A549 (cell line): ENCODE measurements at regions of chr6 and their contacts with region 1.

Region 1: GRCh38 chr6:73520688-73521350 is at the start of gene EEF1A1:
- DNase-seq: peak; percentile 85 to 98
- ATAC-seq: peak; percentile 80 to 84
- H3K4me3 ChIP-seq: peak within 1 kb of the TSS; percentile 91
- H3K27ac ChIP-seq: peak within 1 kb of the TSS; percentile 99 to 100
- H3K4me1 ChIP-seq: peaks cover 30% of the 10 kb centered on the region
- CTCF ChIP-seq: no peak
- EP300 ChIP-seq: no peak
- POLR2A ChIP-seq: peak; percentile 98
- RAD21 ChIP-seq: peak in 1 of 2 experiments; percentile 26; a peak in 2 of 5 replicates
- polyA plus RNA-seq, gene EEF1A1: 9,755 and 11,157 TPM in 2 replicates

Region 2: GRCh38 chr6:73461537-73462350 is 59.1 kb before region 1 on chr6 and contains the start of gene MTO1:
- CTCF ChIA-PET with region 1: no interaction called
- POLR2A ChIA-PET with region 1: interaction called, 18 read pairs
- DNase-seq: peak; percentile 86 to 88
- ATAC-seq: peak; percentile 99
- H3K4me3 ChIP-seq: peak within 1 kb of the TSS; percentile 65
- H3K27ac ChIP-seq: peak within 1 kb of the TSS; percentile 87 to 89
- H3K4me1 ChIP-seq: no peaks in the 10 kb centered on the region
- CTCF ChIP-seq: no peak
- EP300 ChIP-seq: no peak
- POLR2A ChIP-seq: peak; percentile 50
- RAD21 ChIP-seq: no peak
- polyA plus RNA-seq, gene MTO1: 19.9 and 22.1 TPM in 2 replicates

Region 3: GRCh38 chr6:73471686-73472290 is 49.0 kb before region 1 on chr6:
- CTCF ChIA-PET with region 1: no interaction called
- POLR2A ChIA-PET with region 1: no interaction called
- DNase-seq: no peak
- ATAC-seq: no peak
- H3K4me3 ChIP-seq: no peak overlapping the region
- H3K27ac ChIP-seq: no peak overlapping the region
- H3K4me1 ChIP-seq: no peaks in the 10 kb centered on the region
- CTCF ChIP-seq: no peak
- EP300 ChIP-seq: no peak
- POLR2A ChIP-seq: no peak
- RAD21 ChIP-seq: no peak

Region 4: GRCh38 chr6:73566954-73567591 is 46.3 kb after region 1 on chr6:
- CTCF ChIA-PET with region 1: interaction called, 3 read pairs
- POLR2A ChIA-PET with region 1: interaction called, 32 read pairs
- DNase-seq: peak; percentile 74 to 91
- ATAC-seq: peak; percentile 92 to 99
- H3K4me3 ChIP-seq: no peak overlapping the region
- H3K27ac ChIP-seq: peak overlapping the region; percentile 92 to 95
- H3K4me1 ChIP-seq: peaks cover 27% of the 10 kb centered on the region
- CTCF ChIP-seq: no peak
- EP300 ChIP-seq: peak in 1 of 2 experiments; percentile 38; a peak in 1 of 5 replicates
- POLR2A ChIP-seq: no peak
- RAD21 ChIP-seq: no peak

Region 5: DNA sequence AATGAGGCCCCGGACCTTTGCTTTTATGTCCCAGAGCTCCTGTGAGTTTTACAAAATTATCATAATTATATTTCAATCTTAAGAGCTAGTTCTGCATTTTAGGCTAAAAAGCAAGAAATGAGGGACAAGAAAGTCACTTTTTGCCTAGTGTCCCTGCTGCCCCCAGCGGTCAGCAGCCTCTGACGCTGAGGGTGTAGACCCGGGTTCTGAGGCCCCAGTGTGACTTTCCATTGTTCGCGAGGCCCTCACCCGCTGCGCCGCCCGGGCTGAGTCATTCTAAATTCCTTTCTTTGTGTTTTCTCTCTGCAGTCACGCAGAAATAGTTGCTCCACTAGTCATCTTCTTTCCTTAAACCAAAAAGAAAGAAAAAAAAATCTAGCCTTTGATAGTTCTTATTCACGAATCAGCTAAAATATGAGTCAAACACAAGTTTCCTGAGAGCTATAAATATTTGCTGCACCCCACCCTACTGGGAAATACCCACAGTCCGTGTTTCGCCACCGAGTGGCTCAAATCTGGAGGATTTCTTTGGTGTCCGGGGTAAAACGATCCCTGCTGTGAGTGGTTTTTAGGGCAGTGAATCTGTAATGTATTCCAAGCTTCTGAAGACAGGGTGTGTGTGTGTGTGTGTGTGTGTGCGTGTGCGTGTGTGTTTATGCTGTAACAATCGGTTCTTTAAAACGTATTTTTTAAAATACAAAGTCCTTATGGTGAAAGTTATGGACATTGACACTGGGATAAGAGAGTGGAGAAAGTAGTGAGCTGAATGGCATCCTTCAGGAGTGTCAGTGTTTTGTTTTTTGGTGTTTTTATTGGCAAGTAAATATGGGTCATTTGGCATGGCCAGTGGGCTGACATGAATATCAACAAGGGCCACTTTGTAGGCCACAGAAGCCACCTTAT is 59.7 kb after region 1 on chr6:
- CTCF ChIA-PET with region 1: interaction called, 24 read pairs
- POLR2A ChIA-PET with region 1: interaction called, 115 read pairs
- DNase-seq: peak; percentile 77 to 96
- ATAC-seq: peak; percentile 95 to 97
- H3K4me3 ChIP-seq: peak overlapping the region; percentile 34
- H3K27ac ChIP-seq: peak overlapping the region; percentile 93 to 98
- H3K4me1 ChIP-seq: peaks cover 42% of the 10 kb centered on the region
- CTCF ChIP-seq: peak; percentile 39
- EP300 ChIP-seq: peak; percentile 58 to 84; a peak in 3 of 5 replicates
- POLR2A ChIP-seq: no peak
- RAD21 ChIP-seq: peak; percentile 46 to 51; a peak in 4 of 5 replicates

Region 6: DNA sequence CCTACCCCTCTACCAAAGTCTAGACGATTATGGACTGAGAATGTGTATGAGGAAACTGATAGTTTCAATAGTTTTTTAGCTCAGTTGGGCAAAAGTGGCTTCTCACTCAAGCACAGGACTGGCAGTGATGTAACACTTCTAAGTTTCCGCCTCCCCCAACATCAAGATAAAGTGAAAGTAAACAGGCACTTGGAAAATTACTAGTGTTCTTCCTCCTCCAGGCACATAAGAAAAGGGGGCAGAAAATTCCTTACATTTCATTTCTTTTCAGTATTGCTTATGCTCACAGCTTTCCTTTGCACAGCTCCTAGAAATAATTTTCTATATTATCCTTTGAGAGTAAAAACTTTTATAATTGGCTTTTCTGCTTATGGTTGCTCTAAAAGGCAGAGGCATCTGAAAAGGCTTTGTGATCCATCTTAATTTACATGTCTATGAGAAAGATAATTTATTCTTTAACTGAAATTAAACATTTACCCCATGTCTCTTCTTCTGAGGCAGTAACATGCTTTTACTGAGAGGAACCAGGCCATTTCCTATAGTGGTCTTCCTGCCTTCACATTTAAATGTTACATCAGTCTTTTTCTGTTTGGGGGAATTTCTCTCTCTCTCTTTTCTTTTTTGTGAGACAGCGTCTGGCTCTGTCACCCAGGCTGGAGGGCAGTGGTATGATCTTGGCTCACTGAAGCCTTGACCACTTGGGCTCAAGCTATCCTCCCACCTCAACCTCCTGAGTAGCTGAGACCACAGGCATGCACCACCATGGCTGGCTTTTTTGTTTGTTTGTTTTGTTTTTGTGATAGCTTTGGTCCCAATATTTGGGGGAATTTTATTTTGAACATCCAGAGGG is 65.0 kb after region 1 on chr6:
- CTCF ChIA-PET with region 1: interaction called, 24 read pairs
- POLR2A ChIA-PET with region 1: interaction called, 115 read pairs
- DNase-seq: peak; percentile 48 to 81
- ATAC-seq: peak; percentile 77 to 81
- H3K4me3 ChIP-seq: peak overlapping the region; percentile 5; the same call in 2 of the 3 replicates
- H3K27ac ChIP-seq: peak overlapping the region; percentile 93 to 98
- H3K4me1 ChIP-seq: peaks cover 35% of the 10 kb centered on the region
- CTCF ChIP-seq: no peak
- EP300 ChIP-seq: peak in 1 of 2 experiments; percentile 41; a peak in 1 of 5 replicates
- POLR2A ChIP-seq: no peak
- RAD21 ChIP-seq: 0 out of 5 replicates have a peak, but pooled peaks of 1 of the 2 experiments have one; percentile 6

Region 7: DNA sequence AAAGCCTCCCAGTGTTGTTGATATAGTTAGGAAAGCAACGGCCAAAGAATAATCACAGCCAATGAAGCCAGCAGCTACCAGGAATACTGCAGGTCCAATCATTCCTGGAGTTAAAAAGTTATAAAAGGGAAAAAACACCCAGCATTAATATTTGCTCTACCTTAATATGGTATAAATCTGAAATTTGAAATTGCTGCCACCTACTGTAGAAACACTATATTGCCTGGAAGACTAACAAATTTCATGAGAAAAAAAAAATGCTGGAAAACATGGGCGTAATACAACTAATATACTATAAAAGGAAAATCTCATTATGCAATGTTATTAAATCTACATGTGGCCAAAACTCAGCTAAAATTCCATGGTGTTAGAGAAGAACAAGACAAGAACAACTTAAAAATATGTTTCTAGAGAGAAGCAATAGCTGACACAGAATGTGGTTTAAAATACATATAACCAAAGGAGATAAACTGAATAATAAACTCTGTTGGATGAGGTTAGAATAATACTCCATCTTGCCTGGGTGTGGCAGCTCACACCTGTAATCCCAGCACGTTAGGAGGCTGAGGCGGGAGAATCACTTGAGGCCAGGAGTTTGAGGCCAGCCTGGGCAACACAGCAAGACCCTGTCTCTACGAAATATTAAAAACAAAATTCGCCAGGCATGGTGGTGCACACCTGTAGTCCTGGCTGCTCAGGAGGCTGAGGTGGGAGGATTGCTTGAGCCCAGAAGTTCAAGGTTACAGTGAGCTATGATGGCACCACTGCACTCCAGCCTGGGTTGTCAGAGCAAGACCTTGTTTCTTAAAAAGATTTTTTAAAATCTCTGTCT is 89.8 kb after region 1 on chr6:
- CTCF ChIA-PET with region 1: interaction called, 40 read pairs
- POLR2A ChIA-PET with region 1: interaction called, 7 read pairs
- DNase-seq: peak in 1 of 2 experiments; percentile 38
- ATAC-seq: peak in 1 of 2 experiments; percentile 73; a peak in 3 of 6 replicates
- H3K4me3 ChIP-seq: no peak overlapping the region
- H3K27ac ChIP-seq: peak overlapping the region; percentile 57 to 67; a peak in 5 of 6 replicates
- H3K4me1 ChIP-seq: 0 out of 3 replicates have a peak, but pooled peaks cover 14% of the 10 kb centered on the region
- CTCF ChIP-seq: peak; percentile 60
- EP300 ChIP-seq: no peak
- POLR2A ChIP-seq: no peak
- RAD21 ChIP-seq: peak; percentile 70 to 77

Region 8: GRCh38 chr6:73653571-73654424 is 133.0 kb after region 1 on chr6 and contains the start of gene SLC17A5:
- CTCF ChIA-PET with region 1: interaction called, 5 read pairs
- POLR2A ChIA-PET with region 1: interaction called, 46 read pairs
- DNase-seq: peak; percentile 87 to 89
- ATAC-seq: peak; percentile 90 to 95
- H3K4me3 ChIP-seq: peak within 1 kb of the TSS; percentile 86
- H3K27ac ChIP-seq: peak within 1 kb of the TSS; percentile 90 to 97
- H3K4me1 ChIP-seq: peaks cover 16% of the 10 kb centered on the region; the same call in 2 of the 3 replicates
- CTCF ChIP-seq: no peak
- EP300 ChIP-seq: no peak
- POLR2A ChIP-seq: peak; percentile 61
- RAD21 ChIP-seq: no peak
- polyA plus RNA-seq, gene SLC17A5: 9.6 and 10.0 TPM in 2 replicates